ENCODE measurements at regions of chr16 and their contacts with region 1.

Region 1: GRCh38 chr16:85615852-85616606 is 2.9 kb downstream of the GSE1 start:
- DNase-seq: peak; percentile 76
- H3K4me3 Mint-ChIP-seq: peak overlapping the region; percentile 60
- H3K27ac Mint-ChIP-seq: no peak overlapping the region
- H3K4me1 Mint-ChIP-seq: peaks cover 31% of the 10 kb centered on the region
- H3K27me3 Mint-ChIP-seq: peaks cover 14% of the 10 kb centered on the region

Region 2: GRCh38 chr16:85420501-85421337 is 195.3 kb before region 1 on chr16:
- CTCF ChIA-PET with region 1: interaction called, 55 read pairs
- POLR2A ChIA-PET with region 1: no interaction called
- DNase-seq: peak; percentile 68
- H3K4me3 Mint-ChIP-seq: no peak overlapping the region
- H3K27ac Mint-ChIP-seq: no peak overlapping the region
- H3K4me1 Mint-ChIP-seq: peaks cover 4% of the 10 kb centered on the region
- H3K27me3 Mint-ChIP-seq: no peaks in the 10 kb centered on the region

Region 3: DNA sequence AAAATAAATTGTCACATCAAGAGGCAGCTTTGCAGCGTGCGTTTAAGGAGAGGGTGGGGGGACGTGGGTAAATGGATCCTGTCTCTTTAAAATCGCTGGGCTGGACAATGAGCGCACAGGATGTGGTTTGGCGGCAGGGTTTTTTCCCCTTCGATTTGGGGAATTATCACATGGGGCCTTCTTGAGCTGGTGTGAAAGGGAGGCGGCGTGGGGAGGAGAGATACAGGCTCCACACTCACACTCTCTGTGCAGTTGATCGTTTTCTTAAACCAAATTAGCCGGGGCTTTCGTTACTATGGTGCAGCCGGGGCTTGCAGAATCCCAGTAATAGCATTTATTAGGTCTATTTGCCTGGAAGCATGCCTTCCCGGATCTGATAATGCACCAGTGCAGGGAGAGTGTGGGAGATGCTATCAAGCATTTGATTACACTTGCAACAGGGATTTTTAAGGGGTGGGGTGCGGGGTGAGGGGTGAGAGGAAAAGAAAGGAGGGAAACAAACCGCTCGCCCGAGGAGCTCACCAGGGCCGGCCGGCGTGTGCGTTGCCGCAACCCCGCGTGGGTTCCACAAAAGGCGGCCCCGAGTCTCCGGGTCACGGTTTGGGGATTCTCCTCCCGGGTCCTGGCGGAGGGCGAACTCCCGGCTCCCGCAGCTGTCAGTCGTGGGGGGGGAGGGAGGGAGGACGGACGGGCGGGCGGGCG is 61.8 kb before region 1 on chr16:
- CTCF ChIA-PET with region 1: interaction called, 23 read pairs
- POLR2A ChIA-PET with region 1: no interaction called
- DNase-seq: peak; percentile 84
- H3K4me3 Mint-ChIP-seq: peak overlapping the region; percentile 88
- H3K27ac Mint-ChIP-seq: peak overlapping the region; percentile 96
- H3K4me1 Mint-ChIP-seq: peaks cover 36% of the 10 kb centered on the region
- H3K27me3 Mint-ChIP-seq: peaks cover 3% of the 10 kb centered on the region

Region 4: GRCh38 chr16:85564277-85565051 is 51.6 kb before region 1 on chr16:
- CTCF ChIA-PET with region 1: interaction called, 10 read pairs
- POLR2A ChIA-PET with region 1: no interaction called
- DNase-seq: no peak
- H3K4me3 Mint-ChIP-seq: no peak overlapping the region
- H3K27ac Mint-ChIP-seq: no peak overlapping the region
- H3K4me1 Mint-ChIP-seq: peaks cover 30% of the 10 kb centered on the region
- H3K27me3 Mint-ChIP-seq: no peaks in the 10 kb centered on the region

Region 5: GRCh38 chr16:85629326-85629725 is 13.3 kb after region 1 on chr16:
- CTCF ChIA-PET with region 1: interaction called, 12 read pairs
- POLR2A ChIA-PET with region 1: no interaction called
- DNase-seq: no peak
- H3K4me3 Mint-ChIP-seq: no peak overlapping the region
- H3K27ac Mint-ChIP-seq: no peak overlapping the region
- H3K4me1 Mint-ChIP-seq: peaks cover 10% of the 10 kb centered on the region
- H3K27me3 Mint-ChIP-seq: no peaks in the 10 kb centered on the region

Measured in activated CD4-positive, alpha-beta T cell treated with anti-CD3 and anti-CD28 coated beads, Interleukin-2, amount 10 ng/mL, durations not matched to agents 7 days and 5 days (primary cell).